Natural killer cell (primary cell): ENCODE measurements at regions of chr7 and their contacts with region 1.

Region 1: DNA sequence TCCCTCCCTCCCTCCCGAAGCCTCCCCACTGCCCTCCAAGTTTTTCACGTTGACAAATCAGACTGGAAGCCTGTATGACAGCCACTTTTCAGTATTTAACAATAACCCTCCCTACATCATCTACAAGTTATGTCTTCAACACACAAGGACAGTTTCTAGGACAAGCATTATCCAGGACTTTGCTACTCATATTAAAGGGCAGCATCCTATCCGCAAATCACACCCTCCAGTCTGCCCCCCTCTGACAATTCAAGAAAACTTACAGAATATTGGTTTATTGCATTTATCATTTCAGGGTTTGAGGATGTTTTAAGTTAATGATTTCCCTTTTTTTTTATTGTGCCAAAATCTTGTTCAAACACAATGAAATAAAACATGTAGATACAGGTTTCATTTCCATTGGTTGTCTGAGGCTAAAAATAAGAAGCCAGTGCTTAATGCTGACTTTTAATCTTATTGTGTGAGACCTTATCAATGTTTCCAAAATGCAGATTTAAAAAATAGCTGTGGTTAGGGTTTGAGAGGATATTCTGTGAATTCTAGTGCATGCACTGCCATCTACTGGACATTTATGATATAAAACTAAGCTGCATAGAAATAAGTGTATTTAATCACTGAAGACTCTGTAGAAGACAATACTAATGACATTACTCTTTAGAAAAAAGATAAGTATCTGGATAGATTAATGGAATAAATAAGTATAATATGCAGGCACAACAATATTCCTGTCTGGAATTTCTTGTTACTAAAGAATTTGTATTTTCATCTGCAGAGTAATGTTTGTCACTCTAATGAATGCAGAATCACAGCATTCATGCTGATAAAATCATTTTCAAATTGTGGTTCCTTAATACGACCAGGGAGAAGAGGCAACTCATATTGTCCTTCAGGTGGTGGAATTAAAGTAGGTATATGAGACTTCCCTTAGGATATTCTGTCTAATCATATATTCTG is 64.1 kb downstream of the CAV1 start:
- DNase-seq: peak in 1 of 2 donors; percentile 67
- ATAC-seq: peak; percentile 53 to 66 (median 57)
- H3K4me3 ChIP-seq: no peak overlapping the region
- H3K4me3 Mint-ChIP-seq: no peak overlapping the region
- H3K27ac ChIP-seq: no peak overlapping the region
- H3K27ac Mint-ChIP-seq: no peak overlapping the region
- H3K4me1 ChIP-seq: peaks cover 7% of the 10 kb centered on the region
- H3K4me1 Mint-ChIP-seq: peaks cover 18 to 22% of the 10 kb centered on the region in 2 donors
- H3K27me3 ChIP-seq: peaks cover 7% of the 10 kb centered on the region
- H3K27me3 Mint-ChIP-seq: peaks cover 19 to 39% of the 10 kb centered on the region in 2 donors
- CTCF ChIP-seq: peak; percentile 88

Region 2: GRCh38 chr7:116399819-116400218 is 189.1 kb before region 1 on chr7:
- intact Hi-C with region 1: no loop called
- DNase-seq: no peak
- ATAC-seq: no peak
- H3K4me3 ChIP-seq: no peak overlapping the region
- H3K4me3 Mint-ChIP-seq: no peak overlapping the region
- H3K27ac ChIP-seq: no peak overlapping the region
- H3K27ac Mint-ChIP-seq: no peak overlapping the region
- H3K4me1 ChIP-seq: no peaks in the 10 kb centered on the region
- H3K4me1 Mint-ChIP-seq: no peaks in the 10 kb centered on the region
- H3K27me3 ChIP-seq: no peaks in the 10 kb centered on the region
- H3K27me3 Mint-ChIP-seq: peaks cover 20 to 28% of the 10 kb centered on the region in 2 donors
- CTCF ChIP-seq: no peak

Region 3: GRCh38 chr7:116630932-116631745 is 42.2 kb after region 1 on chr7:
- intact Hi-C with region 1: no loop called
- DNase-seq: no peak
- ATAC-seq: peak in 1 of 3 donors; percentile 44
- H3K4me3 ChIP-seq: no peak overlapping the region
- H3K4me3 Mint-ChIP-seq: no peak overlapping the region
- H3K27ac ChIP-seq: no peak overlapping the region
- H3K27ac Mint-ChIP-seq: no peak overlapping the region
- H3K4me1 ChIP-seq: no peaks in the 10 kb centered on the region
- H3K4me1 Mint-ChIP-seq: no peaks in the 10 kb centered on the region
- H3K27me3 ChIP-seq: no peaks in the 10 kb centered on the region
- H3K27me3 Mint-ChIP-seq: peaks cover 6% of the 10 kb centered on the region in 2 donors
- CTCF ChIP-seq: no peak

Region 4: GRCh38 chr7:116809636-116810266 is 220.8 kb after region 1 on chr7:
- intact Hi-C with region 1: loop called (anchors 10 kb)
- DNase-seq: peak in 1 of 2 donors; percentile 66
- ATAC-seq: peak in 2 of 3 donors; percentile 48 to 52
- H3K4me3 ChIP-seq: no peak overlapping the region
- H3K4me3 Mint-ChIP-seq: no peak overlapping the region
- H3K27ac ChIP-seq: no peak overlapping the region
- H3K27ac Mint-ChIP-seq: no peak overlapping the region
- H3K4me1 ChIP-seq: no peaks in the 10 kb centered on the region
- H3K4me1 Mint-ChIP-seq: no peaks in the 10 kb centered on the region
- H3K27me3 ChIP-seq: no peaks in the 10 kb centered on the region
- H3K27me3 Mint-ChIP-seq: no peaks in the 10 kb centered on the region
- CTCF ChIP-seq: peak; percentile 52